GM12878 (cell line): ENCODE measurements at regions of chr17 and their contacts with region 1.

Region 1: GRCh38 chr17:13031718-13032350 is 14.0 kb upstream of the ELAC2 start:
- DNase-seq: no peak
- ATAC-seq: peak; percentile 89
- H3K4me3 ChIP-seq: no peak overlapping the region
- H3K27ac ChIP-seq: no peak overlapping the region
- H3K4me1 ChIP-seq: no peaks in the 10 kb centered on the region
- H3K27me3 ChIP-seq: no peaks in the 10 kb centered on the region
- CTCF ChIP-seq: peak; percentile 69 to 87 (median 81)
- EP300 ChIP-seq: no peak
- POLR2A ChIP-seq: no peak
- RAD21 ChIP-seq: peak; percentile 47; the same call in 1 of the 2 replicates

Region 2: DNA sequence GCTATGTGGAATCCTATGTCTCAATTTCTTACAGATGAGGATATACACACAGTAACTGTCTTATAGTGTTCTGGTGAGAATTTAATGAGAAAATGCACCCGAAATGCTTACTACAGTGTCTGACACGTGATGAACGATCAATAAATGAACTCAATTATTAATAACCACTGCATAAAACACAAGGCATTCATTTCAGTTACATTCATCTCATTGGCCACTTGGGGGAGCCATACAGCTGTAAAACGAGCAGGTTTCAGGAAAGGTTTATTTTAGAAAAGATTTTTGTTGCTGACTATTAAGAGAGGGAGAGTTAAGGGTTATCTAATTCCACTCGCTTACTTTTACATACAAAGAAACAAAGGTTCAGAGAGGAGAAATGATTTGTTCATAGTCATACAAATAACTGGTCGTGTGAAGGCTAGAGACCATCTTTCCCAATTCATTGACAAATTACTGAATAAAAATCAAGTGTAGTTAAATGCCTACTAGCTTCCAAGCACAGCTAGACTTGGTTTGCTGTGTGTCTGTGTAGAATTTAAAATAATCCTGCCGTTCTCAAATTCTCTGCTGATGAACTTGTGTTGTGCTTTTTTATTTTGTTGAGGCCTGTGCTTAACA is 851.1 kb before region 1 on chr17:
- CTCF ChIA-PET with region 1: interaction called, 3 read pairs
- POLR2A ChIA-PET with region 1: no interaction called
- RAD21 ChIA-PET with region 1: interaction called, 3 read pairs
- SMC1A ChIA-PET with region 1: no interaction called
- in situ Hi-C with region 1: no loop called
- intact Hi-C with region 1: loop called (anchors 2 kb)
- DNase-seq: peak; percentile 0
- ATAC-seq: peak; percentile 68
- H3K4me3 ChIP-seq: no peak overlapping the region
- H3K27ac ChIP-seq: no peak overlapping the region
- H3K4me1 ChIP-seq: no peaks in the 10 kb centered on the region
- H3K27me3 ChIP-seq: no peaks in the 10 kb centered on the region
- CTCF ChIP-seq: peak; percentile 58 to 81 (median 74); a peak in 5 of 6 replicates
- EP300 ChIP-seq: no peak
- POLR2A ChIP-seq: no peak
- RAD21 ChIP-seq: peak; percentile 88

Region 3: GRCh38 chr17:12995896-12996295 is 35.9 kb before region 1 on chr17:
- CTCF ChIA-PET with region 1: no interaction called
- POLR2A ChIA-PET with region 1: no interaction called
- RAD21 ChIA-PET with region 1: no interaction called
- SMC1A ChIA-PET with region 1: no interaction called
- in situ Hi-C with region 1: no loop called
- intact Hi-C with region 1: no loop called
- DNase-seq: no peak
- ATAC-seq: no peak
- H3K4me3 ChIP-seq: no peak overlapping the region
- H3K27ac ChIP-seq: no peak overlapping the region
- H3K4me1 ChIP-seq: no peaks in the 10 kb centered on the region
- H3K27me3 ChIP-seq: no peaks in the 10 kb centered on the region
- CTCF ChIP-seq: no peak
- EP300 ChIP-seq: no peak
- POLR2A ChIP-seq: no peak
- RAD21 ChIP-seq: no peak

Region 4: GRCh38 chr17:13044572-13045065 is 12.8 kb after region 1 on chr17:
- CTCF ChIA-PET with region 1: interaction called, 40 read pairs
- POLR2A ChIA-PET with region 1: no interaction called
- RAD21 ChIA-PET with region 1: no interaction called
- SMC1A ChIA-PET with region 1: interaction called, 7 read pairs
- in situ Hi-C with region 1: no loop called
- intact Hi-C with region 1: no loop called
- DNase-seq: no peak
- ATAC-seq: no peak
- H3K4me3 ChIP-seq: no peak overlapping the region
- H3K27ac ChIP-seq: no peak overlapping the region
- H3K4me1 ChIP-seq: no peaks in the 10 kb centered on the region
- H3K27me3 ChIP-seq: no peaks in the 10 kb centered on the region
- CTCF ChIP-seq: no peak
- EP300 ChIP-seq: no peak
- POLR2A ChIP-seq: no peak
- RAD21 ChIP-seq: no peak

Region 5: DNA sequence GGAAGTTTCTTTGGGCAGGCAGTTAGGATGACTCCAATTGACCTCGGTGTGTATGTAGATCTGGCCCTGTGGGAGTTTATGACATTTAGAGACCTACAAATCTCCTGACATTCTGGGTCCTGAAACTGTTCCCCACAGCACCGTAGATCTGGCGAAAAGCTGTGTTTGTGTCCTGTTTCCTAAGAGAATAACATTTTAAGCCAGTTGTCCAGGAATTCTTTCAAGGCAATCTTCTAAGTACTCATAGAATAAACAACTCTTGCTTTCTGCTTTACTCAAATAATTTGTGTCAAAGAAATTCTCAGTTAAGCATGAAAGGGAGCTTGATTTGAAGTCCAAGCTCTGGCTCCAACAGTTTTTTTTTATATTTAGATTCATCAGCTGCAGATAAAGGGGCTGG is 64.5 kb after region 1 on chr17:
- CTCF ChIA-PET with region 1: interaction called, 14 read pairs
- POLR2A ChIA-PET with region 1: no interaction called
- RAD21 ChIA-PET with region 1: no interaction called
- SMC1A ChIA-PET with region 1: interaction called, 4 read pairs
- in situ Hi-C with region 1: no loop called
- intact Hi-C with region 1: no loop called
- DNase-seq: no peak
- ATAC-seq: no peak
- H3K4me3 ChIP-seq: no peak overlapping the region
- H3K27ac ChIP-seq: no peak overlapping the region
- H3K4me1 ChIP-seq: no peaks in the 10 kb centered on the region
- H3K27me3 ChIP-seq: no peaks in the 10 kb centered on the region
- CTCF ChIP-seq: no peak
- EP300 ChIP-seq: no peak
- POLR2A ChIP-seq: no peak
- RAD21 ChIP-seq: no peak

Region 6: DNA sequence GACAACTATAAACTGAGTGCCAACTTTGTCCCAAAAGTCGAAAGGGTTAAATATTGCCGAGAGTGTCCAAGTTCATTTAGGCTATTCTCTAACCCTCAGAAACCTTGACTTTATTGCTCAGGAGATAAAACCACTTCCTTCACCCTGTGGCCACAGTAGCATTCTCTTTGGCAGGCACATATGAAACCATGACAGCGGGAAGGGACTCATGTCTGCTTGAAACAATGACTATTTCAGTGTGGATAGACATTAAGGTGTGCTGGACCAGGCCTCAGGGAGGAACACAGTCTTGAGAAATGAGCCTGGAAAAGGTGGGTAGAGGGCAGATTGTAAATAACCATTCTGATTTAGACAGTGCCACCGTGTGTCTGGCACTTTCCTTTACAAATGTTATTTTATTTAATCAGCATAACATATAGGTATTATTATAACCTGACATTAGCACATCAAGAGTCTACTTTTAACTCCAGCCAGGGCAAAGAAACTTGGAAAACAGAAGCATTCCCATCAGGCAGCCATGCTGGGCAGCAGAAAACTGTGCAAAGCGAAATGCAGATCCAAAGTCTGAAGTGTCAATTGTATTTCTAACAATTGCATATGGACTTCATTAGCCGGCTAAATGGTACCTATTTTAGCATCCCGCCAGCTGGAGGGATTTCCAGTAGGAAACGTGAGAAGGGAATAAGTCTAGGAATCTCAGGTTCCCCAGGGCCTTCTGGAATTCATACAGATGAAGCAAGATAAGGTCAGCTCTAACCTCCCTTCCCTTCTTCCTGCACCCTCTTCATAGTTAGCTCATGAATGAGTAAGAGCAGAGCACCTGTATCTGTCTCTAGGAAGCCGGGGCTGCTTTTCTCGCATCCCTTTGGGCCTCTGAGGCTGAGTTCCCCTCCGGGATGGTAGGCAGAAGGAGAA is 198.8 kb after region 1 on chr17:
- CTCF ChIA-PET with region 1: interaction called, 12 read pairs
- POLR2A ChIA-PET with region 1: no interaction called
- RAD21 ChIA-PET with region 1: no interaction called
- SMC1A ChIA-PET with region 1: interaction called, 4 read pairs
- in situ Hi-C with region 1: no loop called
- intact Hi-C with region 1: no loop called
- DNase-seq: no peak
- ATAC-seq: no peak
- H3K4me3 ChIP-seq: no peak overlapping the region
- H3K27ac ChIP-seq: no peak overlapping the region
- H3K4me1 ChIP-seq: no peaks in the 10 kb centered on the region
- H3K27me3 ChIP-seq: no peaks in the 10 kb centered on the region
- CTCF ChIP-seq: no peak
- EP300 ChIP-seq: no peak
- POLR2A ChIP-seq: no peak
- RAD21 ChIP-seq: no peak